ENCODE measurements at regions of chr6 and their contacts with region 1.

Region 1: GRCh38 chr6:139375232-139376016 is 976 bp upstream of the CITED2 start:
- DNase-seq: peak; percentile 91 to 93
- ATAC-seq: peak; percentile 76 to 81 (median 79)
- H3K4me3 ChIP-seq: peak overlapping the region; percentile 80
- H3K27ac ChIP-seq: peak overlapping the region; percentile 98
- H3K4me1 ChIP-seq: peaks cover 19% of the 10 kb centered on the region
- H3K27me3 ChIP-seq: no peaks in the 10 kb centered on the region
- CTCF ChIP-seq: no peak

Region 2: GRCh38 chr6:139515511-139515910 is 140.1 kb after region 1 on chr6:
- intact Hi-C with region 1: loop called in 1 of 2 experiments (anchors 10 kb)
- DNase-seq: no peak
- ATAC-seq: no peak
- H3K4me3 ChIP-seq: no peak overlapping the region
- H3K27ac ChIP-seq: no peak overlapping the region
- H3K4me1 ChIP-seq: peaks cover 26% of the 10 kb centered on the region
- H3K27me3 ChIP-seq: no peaks in the 10 kb centered on the region
- CTCF ChIP-seq: no peak

Region 3: DNA sequence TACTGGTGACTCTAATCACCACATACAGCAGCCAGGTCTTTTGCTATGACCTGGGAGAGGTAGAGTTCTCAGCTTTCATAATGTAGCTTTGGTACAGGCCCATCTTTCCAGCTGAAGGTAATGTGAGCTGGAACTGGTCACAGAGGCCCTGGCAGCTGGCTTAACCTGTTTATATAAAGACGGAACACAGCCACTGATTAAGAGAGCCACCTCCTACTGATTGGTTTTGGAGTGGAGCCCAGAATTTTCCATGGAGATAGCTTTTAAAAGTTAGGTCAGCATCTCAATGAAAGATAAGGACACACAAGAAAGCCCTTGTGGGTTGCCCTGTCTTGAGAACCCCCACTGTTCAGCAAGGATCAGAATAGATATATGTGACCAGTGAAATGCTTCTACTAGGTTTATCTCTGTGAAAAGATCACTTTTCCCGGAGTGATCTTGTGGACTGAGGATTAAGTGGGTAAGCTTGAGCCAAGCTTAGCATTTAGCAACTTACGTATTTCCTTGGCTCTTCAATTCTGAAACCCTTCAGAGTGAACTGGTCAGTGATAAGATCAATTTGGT is 212.7 kb after region 1 on chr6:
- intact Hi-C with region 1: loop called in 1 of 2 experiments (anchors 5 kb)
- DNase-seq: no peak
- ATAC-seq: peak; percentile 68 to 84 (median 78)
- H3K4me3 ChIP-seq: no peak overlapping the region
- H3K27ac ChIP-seq: peak overlapping the region; percentile 83
- H3K4me1 ChIP-seq: peaks cover 50% of the 10 kb centered on the region
- H3K27me3 ChIP-seq: no peaks in the 10 kb centered on the region
- CTCF ChIP-seq: no peak

Region 4: DNA sequence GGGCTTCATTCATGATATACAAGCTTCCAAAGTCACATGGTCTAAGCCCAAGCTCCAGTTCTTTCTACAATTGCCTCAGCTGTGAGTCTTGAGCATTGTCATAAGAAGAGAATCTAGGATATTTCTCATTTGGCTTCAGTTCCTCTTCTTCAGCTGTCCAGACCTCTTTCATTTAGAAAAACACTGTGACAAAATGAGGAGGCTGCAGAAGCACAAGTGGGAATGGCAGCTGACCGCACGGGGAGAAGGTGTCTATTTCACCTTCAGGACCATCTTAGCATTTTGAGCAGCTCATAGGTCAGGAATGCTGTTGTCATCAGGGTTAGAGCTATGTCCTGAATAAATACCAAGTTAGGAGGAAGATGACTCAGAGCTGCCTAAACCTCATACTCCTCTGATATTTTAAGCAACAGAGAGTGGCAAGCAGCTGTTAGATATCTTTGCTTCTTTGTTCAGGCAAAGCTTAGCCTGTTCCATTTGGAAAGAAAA is 389.1 kb after region 1 on chr6:
- intact Hi-C with region 1: loop called (anchors 2 to 5 kb)
- DNase-seq: peak; percentile 54 to 67
- ATAC-seq: peak; percentile 94 to 98 (median 96)
- H3K4me3 ChIP-seq: peak overlapping the region; percentile 9
- H3K27ac ChIP-seq: peak overlapping the region; percentile 96
- H3K4me1 ChIP-seq: peaks cover 57% of the 10 kb centered on the region
- H3K27me3 ChIP-seq: no peaks in the 10 kb centered on the region
- CTCF ChIP-seq: no peak

Region 5: DNA sequence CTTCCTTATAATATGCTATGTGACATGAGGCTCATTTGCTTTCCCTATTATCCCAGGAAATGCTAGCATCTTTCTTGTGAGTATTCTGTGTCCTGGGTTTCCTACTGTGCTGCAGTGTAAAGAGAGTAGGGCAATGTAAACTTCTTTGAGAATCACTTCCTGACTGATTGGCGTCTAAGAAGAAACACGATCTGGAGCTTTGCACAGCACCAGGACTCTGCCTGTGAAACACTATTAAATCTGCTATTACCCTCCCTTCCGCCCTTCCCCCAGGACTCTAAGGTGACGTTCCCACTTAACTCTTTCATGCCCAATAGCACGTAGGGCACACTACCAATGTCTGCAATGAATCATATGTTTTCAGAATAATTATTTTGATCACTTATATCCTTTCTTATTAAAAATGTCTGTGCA is 606.4 kb after region 1 on chr6:
- intact Hi-C with region 1: loop called in 1 of 2 experiments (anchors 5 kb)
- DNase-seq: no peak
- ATAC-seq: peak; percentile 44 to 74 (median 70)
- H3K4me3 ChIP-seq: no peak overlapping the region
- H3K27ac ChIP-seq: peak overlapping the region; percentile 57
- H3K4me1 ChIP-seq: peaks cover 27% of the 10 kb centered on the region
- H3K27me3 ChIP-seq: no peaks in the 10 kb centered on the region
- CTCF ChIP-seq: no peak

Region 6: DNA sequence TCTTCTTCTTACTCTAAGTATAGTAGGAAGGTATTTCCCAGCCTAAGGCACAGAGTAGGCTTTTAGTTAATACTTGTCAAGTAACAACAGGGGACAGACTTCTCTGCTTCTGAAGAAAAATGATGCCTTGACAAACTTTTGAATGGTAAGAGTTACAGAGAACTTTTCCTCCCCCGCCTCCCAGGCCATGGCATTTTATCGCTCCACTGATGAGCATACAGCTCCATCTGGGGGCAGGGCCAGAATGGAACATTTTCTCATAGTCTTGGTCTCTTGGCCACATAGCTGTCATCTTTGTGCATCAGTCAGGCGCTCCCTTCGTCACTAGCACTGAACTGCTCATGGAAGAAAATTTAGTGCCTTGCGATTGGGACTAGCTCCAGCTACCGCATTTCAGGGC is 1065.8 kb after region 1 on chr6:
- intact Hi-C with region 1: loop called (anchors 1 to 5 kb)
- DNase-seq: peak; percentile 25 to 68
- ATAC-seq: peak; percentile 83 to 95 (median 84)
- H3K4me3 ChIP-seq: no peak overlapping the region
- H3K27ac ChIP-seq: peak overlapping the region; percentile 17
- H3K4me1 ChIP-seq: peaks cover 31% of the 10 kb centered on the region
- H3K27me3 ChIP-seq: no peaks in the 10 kb centered on the region
- CTCF ChIP-seq: peak; percentile 59

Measured in psoas muscle (tissue), 8 donors.